Right ventricle myocardium inferior (tissue), 1 donor: ENCODE measurements at regions of chr12 and their contacts with region 1.

Region 1: DNA sequence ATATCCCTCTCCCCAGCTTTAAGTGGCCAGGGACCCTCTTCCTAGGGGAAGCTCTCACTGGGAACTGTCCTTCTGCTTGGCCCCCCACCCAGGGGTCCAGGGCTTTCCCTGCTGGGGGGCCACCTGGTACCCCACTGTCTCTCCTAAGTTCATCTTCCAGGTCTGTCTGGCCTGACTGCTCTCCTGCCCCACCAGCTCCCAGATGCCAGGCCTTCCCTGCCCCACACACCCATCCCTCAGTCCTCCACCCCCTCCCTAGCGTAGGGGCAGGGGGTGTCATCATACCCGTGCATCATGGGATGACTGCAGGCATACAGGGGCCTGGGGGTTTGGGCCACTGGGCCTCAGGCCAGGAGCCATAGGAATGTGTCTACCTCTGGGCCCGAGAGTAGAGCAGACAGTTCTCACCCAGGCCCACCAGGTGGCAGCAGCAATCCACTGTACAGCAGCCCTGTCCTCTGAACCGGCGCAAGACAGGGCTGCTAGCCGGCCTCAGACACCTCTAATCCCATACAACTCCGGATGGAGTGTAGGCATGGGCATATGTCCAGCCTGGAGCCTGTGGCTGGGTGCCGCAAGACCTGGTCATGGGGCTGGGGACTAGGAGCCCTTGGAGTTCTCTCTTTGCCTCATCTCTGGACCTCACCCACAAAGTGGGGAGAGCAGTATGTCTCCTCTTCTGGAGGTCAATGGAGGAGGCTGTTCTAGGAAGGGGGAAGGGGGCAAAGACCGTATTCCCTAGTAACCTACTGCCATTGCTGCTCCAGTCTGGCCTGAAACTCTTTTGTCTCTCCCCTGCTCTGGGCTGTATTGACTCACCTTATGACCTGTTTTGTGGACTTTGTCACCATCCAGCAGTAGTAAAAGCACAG is 10.0 kb upstream of the SMARCD1 start:
- DNase-seq: peak; percentile 90
- ATAC-seq: peak; percentile 89

Region 2: GRCh38 chr12:49866859-49867579 is 208.2 kb before region 1 on chr12:
- intact Hi-C with region 1: loop called (anchors 5 kb)
- DNase-seq: peak; percentile 85
- ATAC-seq: no peak

Region 3: GRCh38 chr12:49967042-49967776 is 108.0 kb before region 1 on chr12:
- intact Hi-C with region 1: loop called (anchors 1 kb)
- DNase-seq: peak; percentile 96
- ATAC-seq: peak; percentile 82

Region 4: DNA sequence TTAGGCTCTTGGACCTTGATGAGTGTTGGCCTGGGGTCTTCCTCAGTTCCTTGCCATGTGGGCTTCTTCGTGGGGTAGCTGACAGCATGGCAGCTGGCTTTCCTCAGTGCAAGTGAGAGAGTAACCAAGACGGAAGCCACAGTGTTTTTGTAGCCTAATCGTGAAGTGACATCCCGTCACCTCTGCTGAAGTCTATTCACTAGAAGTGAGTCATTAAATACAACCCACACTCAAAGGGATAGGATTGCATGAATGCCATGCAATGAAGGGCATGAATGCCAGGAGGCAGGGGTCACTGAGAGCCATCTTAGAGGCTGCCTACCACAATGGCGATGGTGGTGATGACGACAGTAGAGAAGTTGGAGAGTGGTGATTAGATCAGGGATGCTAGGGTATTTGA is 31.3 kb before region 1 on chr12:
- intact Hi-C with region 1: loop called (anchors 1 kb)
- DNase-seq: no peak
- ATAC-seq: no peak

Region 5: DNA sequence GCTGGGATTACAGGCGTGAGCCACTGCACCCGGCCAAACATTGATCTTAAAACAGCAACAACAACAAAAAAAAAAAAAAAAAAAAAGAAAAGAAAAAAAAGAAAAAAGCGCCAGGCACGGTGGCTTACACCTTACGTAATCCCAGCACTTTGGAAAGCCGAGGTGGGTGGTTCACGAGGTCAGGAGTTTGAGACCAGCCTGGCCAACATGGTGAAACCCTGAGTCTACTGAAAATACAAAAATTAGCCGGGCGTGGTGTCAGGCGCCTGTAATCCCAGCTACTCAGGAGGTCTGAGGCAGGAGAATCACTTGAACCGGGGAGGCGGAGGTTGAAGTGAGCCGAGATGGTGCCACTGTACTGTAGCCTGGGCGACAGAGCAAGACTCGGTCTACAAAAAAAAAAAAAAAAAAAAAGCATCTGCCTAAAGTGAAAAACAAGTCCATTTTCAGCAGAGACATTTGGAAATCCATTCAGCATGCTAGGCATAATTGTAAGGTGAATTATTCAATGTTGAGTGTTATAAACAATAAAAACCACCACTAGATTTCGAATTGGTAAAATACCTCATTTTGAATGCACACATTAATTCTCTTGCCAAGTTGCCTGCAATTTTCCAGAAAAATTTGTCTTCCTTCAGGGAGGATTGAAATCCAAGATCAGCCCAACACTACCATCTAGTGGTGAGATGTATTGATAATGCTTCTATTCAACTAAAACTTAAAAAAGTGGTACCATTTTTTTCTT is 100.0 kb after region 1 on chr12:
- intact Hi-C with region 1: loop called (anchors 1 kb)
- DNase-seq: no peak
- ATAC-seq: no peak

Region 6: GRCh38 chr12:50314629-50315312 is 239.6 kb after region 1 on chr12:
- intact Hi-C with region 1: loop called (anchors 5 kb)
- DNase-seq: no peak
- ATAC-seq: no peak